SK-N-SH (cell line): ENCODE measurements at regions of chr10 and their contacts with region 1.

Region 1: DNA sequence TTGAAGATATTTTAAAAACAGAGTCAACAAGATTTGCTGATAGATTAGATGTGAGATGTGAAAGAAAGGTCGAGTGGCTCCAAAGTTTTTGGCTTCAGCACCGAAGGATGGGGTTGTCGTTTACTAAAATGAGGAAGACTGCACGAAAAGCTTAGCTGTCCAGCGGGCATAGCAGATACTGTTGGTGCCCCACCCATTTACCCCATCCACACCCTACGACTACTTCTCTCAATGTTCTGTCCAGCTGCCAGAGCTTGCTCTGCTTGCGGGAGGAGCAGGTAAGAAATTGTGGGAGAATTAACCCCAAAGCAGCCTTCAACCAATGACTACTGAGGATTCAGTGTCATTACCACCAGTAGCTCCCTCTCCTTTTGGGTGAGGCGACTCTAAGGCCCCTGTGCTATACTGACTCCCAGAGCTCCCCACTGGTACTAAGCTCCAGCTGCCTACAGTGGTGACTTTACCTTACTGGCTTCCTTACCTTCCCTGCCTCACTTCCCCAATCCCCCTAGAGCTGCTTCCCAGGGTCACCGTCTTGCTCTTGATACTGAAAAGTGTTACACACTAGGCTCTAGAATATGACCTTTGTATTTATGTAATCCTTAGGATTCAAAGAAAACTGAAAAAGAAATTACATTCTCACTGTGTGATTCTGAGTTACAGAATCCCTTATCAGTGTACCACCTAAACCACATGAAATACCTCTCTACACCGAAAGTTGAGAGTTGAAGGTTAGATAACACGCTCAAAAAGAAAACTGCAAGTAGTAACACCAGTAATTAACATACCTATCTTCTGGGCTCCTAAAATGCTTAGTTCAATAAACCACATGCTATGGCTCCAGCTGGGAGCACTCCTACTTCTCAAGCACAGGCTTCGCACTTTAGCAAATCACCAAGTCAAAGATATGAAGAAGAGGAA is 22.3 kb downstream of the CACUL1 start:
- DNase-seq: no peak
- H3K4me3 ChIP-seq: no peak overlapping the region
- H3K27ac ChIP-seq: no peak overlapping the region
- H3K4me1 ChIP-seq: peaks cover 7 to 19% of the 10 kb centered on the region in 2 experiments; a peak in 3 of 4 replicates
- H3K27me3 ChIP-seq: no peaks in the 10 kb centered on the region
- CTCF ChIP-seq: no peak
- EP300 ChIP-seq: no peak
- RAD21 ChIP-seq: no peak

Region 2: GRCh38 chr10:118754720-118755480 is 22.4 kb after region 1 on chr10 and contains the start of gene CACUL1:
- CTCF ChIA-PET with region 1: interaction called, 29 read pairs
- POLR2A ChIA-PET with region 1: interaction called, 4 read pairs
- DNase-seq: peak; percentile 100
- H3K4me3 ChIP-seq: peak within 1 kb of the TSS; percentile 86 to 91
- H3K27ac ChIP-seq: peak within 1 kb of the TSS; percentile 67 to 88
- H3K4me1 ChIP-seq: peaks cover 13 to 18% of the 10 kb centered on the region in 2 experiments; a peak in 3 of 4 replicates
- H3K27me3 ChIP-seq: no peaks in the 10 kb centered on the region
- CTCF ChIP-seq: no peak
- EP300 ChIP-seq: 0 out of 4 replicates have a peak, but pooled peaks of 1 of the 2 experiments have one; percentile 2
- RAD21 ChIP-seq: no peak
- polyA plus RNA-seq, gene CACUL1: 2.6 and 3.9 TPM in 2 replicates

Region 3: DNA sequence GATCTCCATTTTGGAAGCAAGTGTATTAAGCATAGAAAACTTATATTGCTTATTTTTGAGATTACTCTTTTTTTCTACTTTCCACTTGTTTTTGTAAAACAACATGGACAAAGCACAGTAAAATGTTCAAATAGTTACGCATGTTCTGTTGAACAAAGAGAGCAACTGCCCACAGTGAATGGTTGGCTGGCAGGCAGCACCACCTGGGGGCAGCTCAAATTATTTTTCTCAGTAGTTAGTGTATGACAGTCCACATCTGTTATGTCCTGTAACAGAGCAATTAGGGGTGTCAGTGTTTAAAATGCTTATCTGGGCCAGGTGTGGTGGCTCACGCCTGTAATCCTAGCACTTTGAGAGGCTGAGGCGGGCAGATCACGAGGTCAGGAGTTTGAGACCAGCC is 68.4 kb after region 1 on chr10:
- CTCF ChIA-PET with region 1: interaction called, 14 read pairs
- POLR2A ChIA-PET with region 1: no interaction called
- DNase-seq: peak; percentile 68
- H3K4me3 ChIP-seq: no peak overlapping the region
- H3K27ac ChIP-seq: no peak overlapping the region
- H3K4me1 ChIP-seq: no peaks in the 10 kb centered on the region; a peak in 1 of 4 replicates
- H3K27me3 ChIP-seq: no peaks in the 10 kb centered on the region
- CTCF ChIP-seq: peak; percentile 46
- EP300 ChIP-seq: no peak
- RAD21 ChIP-seq: peak; percentile 88